GM18951 (cell line): ENCODE measurements at regions of chr22 and their contacts with region 1.

Region 1: DNA sequence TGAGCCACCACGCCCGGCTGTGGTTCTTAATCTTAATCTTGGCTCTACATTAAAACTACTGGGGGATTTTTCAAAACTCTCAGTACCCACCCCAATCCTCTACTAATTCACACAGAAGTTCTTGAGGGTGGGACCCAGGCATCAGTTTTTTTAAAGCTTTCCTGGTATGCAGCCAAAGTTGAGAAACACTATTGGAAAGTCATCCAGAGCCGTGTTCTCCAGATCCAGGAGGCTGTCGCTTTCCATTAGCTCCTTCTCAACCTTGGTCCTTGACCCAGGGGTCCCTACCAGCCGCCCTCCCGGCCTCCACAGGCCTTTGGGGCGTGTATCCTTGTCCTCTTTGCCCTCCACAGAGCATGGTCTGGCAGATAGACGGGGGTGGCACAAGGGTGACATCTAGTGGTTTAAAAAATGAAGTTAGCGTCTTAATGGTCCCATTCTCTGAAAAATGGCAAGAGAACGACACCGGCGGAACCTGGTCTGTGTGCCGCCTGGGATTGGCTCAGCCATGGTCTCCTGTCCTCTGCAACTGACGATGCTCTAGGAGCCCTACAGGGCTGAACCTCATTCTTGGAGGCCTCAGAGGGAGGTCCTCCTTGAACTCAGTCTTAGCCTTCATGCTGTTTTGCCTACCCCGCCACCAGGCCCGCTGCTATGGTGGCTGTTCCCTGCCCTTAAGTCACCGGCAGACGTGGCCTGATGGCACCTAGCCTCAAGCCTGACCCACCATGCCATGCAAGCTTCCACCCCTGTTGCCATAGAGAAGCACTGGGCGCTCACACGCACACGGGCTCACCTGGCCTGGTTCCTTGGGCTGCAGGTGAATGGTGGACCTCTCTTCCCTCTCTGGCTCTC is 152.0 kb upstream of the SYN3 start:
- POLR2A ChIP-seq: no peak

Region 2: GRCh38 chr22:32823024-32823730 is 387.0 kb before region 1 on chr22:
- in situ Hi-C with region 1: no loop called
- POLR2A ChIP-seq: no peak

Region 3: DNA sequence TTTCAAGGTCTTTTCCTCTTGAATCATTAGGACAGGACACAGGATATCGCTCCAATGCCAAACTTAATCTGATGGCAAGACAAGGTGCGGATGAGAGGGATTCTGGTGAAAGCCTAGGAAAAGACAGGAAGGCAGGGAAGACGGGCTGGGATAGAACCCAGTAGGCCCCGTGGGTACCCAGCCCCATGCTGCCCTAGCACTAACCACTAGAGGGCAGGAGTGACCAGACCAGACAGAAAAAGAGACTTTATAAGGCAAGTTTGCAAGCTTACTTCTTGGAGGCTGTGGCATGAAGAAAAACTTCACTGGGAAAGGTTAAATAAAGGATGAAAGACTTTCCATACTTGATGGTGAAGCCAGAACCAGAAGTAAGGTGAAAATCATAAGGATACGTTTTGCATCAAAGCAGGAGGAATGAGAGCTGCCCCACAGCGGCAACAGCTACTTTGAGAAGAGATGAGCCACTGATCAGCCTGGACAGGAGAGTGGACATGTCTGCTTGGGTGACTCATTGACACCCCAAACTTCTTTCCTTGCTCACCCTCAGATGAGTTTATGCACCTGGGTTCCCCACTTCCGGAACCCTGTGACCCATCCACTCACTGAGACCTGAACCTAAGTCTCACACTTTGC is 191.8 kb before region 1 on chr22:
- in situ Hi-C with region 1: loop called (anchors 25 kb)
- POLR2A ChIP-seq: no peak

Region 4: DNA sequence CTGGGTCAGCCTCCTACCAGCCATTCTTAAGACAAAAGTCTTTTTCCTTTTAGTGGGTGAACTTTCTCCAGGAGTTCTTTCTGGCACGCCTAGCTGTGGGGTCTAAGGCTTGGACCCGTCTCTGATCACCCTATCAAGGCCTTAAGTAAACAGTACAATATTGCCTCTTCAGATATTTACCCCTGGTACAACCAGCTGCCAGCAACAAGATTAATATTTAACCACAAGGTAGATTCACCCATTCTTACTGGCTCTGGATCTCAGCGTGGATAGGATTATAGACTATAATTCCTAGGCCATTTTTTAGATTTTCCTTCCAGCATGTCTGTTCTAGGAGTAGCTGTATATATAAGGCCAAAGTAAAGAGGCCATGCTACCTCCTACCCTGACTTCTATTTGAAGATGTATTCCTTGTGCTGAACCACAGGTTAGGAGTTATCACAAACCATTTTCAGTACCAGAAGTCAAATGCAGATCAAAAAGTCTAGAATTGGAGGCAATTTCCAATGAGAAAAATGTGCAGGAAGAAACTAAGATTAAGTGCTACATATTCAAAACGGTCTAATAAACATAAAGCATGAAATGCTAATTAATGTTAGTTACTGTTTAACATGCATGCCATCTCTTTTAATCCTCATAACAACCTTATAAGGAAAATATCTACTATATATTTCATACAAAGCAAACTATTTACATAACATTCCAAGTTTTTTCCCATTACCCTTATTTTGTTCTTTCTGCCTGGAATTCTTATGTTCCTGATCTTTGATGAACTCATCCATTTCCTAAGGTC is 42.0 kb before region 1 on chr22:
- in situ Hi-C with region 1: no loop called
- POLR2A ChIP-seq: no peak